Panc1 (cell line): ENCODE measurements at regions of chr17 and their contacts with region 1.

Region 1: DNA sequence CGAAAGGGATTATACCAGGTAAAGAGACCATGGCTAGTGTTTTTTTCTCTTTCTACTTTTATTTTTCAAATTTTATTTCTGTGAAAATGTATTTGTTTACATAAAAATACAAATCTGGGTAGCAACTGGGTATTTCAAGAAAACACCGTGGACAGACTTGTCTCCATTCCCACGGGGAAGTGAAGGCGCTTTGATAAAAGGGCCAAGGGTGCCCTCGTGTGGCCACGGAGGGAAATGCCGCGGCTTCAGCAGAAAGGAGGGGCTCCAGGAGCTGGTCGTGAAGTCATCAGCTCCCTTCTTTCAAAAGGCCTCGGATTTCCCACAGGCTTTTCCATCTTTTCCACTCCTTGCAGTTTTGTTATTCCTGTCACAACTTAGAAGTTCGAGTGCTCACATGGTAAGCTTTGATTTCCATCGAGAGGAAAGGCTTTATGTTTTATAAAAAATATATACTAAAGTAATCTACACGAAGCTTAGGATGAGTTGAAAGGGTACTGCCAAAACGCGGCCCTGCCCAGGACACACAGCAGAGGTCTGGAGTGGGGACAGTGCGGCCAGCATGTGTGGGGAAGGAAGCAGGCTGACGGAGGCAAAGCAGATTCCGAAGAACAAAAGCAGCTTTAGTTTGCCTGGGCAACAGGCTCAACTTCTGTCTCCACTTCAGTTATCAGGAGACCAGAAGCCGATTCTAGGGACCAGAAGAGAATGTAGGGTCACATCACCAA is 15.3 kb upstream of the MNT start:
- DNase-seq: no peak
- ATAC-seq: peak; percentile 88
- H3K4me3 ChIP-seq: no peak overlapping the region
- H3K27ac ChIP-seq: no peak overlapping the region
- H3K4me1 ChIP-seq: no peaks in the 10 kb centered on the region
- H3K27me3 ChIP-seq: no peaks in the 10 kb centered on the region
- CTCF ChIP-seq: peak; percentile 95

Region 2: DNA sequence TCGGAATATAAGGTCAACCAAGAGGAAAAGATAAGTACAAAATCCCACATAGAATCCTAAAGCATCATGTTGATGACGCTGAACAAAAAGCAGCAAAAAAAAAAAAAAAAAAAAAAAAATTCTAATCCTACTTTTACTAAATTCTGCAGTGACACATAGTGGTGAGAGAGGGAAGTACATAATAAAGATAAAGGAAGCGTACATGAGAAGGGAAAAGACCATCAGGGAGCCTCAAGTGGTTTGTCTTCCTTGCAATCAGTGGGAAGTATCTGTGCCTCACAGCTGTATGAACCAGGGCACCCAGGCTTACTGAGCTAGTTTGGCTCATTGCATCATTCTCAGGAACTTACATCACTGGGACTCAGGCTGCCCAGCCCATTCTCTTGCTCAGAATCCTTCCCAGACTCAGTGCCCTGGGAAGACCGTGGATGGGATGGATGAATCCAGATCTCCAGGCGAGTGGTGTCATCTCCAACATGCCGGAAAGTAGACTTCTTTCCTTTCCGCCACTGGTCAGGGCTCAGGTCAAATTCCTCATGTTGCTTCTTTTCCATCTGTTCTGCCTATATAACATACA is 133.8 kb before region 1 on chr17:
- CTCF ChIA-PET with region 1: no interaction called
- POLR2A ChIA-PET with region 1: no interaction called
- in situ Hi-C with region 1: no loop called
- intact Hi-C with region 1: no loop called
- DNase-seq: no peak
- ATAC-seq: peak; percentile 65
- H3K4me3 ChIP-seq: no peak overlapping the region
- H3K27ac ChIP-seq: no peak overlapping the region
- H3K4me1 ChIP-seq: no peaks in the 10 kb centered on the region
- H3K27me3 ChIP-seq: no peaks in the 10 kb centered on the region
- CTCF ChIP-seq: peak; percentile 71

Region 3: DNA sequence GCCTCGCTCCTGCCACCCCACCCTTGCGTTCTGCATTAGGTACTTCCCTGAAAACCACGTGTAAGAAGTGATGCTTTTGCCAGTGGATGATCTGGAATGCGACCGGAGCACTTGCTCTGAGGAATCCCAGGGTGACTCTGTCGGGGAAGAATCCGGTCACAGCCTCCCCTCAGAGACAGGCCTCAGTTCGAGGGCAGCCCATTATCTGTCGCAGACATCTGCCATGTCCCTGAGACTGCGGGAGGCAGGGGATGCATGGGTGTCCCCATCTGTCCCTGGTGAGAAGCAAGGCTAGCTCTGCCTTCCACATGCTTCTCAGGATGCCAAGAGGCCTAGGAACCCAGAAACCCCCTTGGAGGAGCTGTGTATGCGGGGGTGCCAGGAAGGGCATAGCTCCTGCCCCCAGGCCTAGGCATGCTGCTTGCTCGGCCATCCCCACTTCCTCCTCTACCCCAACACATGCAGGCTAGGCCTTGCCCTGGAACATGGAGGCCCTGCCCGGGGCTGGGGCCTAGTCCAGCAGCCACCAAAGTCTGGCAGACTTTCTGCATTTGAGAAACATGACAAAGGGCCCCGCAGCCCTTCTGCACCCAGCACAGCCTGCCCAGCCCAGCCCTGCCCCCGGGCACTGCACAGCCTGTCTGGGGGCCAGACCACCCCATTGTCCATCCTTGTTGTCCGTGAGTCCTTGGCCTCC is 35.8 kb before region 1 on chr17:
- CTCF ChIA-PET with region 1: interaction called, 58 read pairs
- POLR2A ChIA-PET with region 1: interaction called, 5 read pairs
- in situ Hi-C with region 1: no loop called
- intact Hi-C with region 1: loop called (anchors 1 kb)
- DNase-seq: no peak
- ATAC-seq: no peak
- H3K4me3 ChIP-seq: no peak overlapping the region
- H3K27ac ChIP-seq: no peak overlapping the region
- H3K4me1 ChIP-seq: peaks cover 12% of the 10 kb centered on the region
- H3K27me3 ChIP-seq: no peaks in the 10 kb centered on the region
- CTCF ChIP-seq: no peak